PC-3 (cell line): ENCODE measurements at regions of chr10 and their contacts with region 1.

Region 1: DNA sequence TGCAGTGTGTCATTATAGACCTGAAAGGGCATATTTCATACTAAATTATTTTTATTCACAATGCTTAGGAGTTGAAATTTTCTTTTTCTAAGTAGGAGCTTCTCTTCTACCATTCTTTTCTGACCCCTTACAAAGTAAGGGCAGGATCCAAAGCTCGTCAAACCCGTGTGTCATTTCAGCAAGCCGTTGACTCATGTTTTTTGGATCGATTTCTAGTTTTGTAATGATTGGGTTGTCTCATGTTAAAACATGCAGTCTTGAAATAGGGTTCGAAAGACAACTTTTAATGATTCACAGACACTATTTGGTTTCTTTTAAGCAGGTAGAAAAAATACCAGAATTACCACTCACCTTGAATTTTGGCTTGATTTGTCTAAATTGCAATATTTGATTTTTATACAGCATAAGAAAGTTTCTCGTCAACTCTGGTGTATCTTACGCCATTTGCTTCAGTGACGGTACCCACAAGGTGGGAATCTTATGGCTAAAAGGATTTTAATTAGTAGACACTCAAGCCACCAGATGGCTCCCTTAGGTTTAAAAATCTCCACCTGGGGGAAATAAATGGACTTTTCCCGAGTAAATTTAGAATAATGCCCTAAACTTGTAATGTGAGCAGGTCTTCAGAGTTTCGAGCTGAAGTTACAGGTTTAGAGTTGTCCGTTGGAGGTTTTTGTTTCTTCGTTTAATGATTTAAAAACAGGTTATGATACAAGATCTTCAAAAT is 283.4 kb downstream of the CCDC3 start:
- DNase-seq: peak; percentile 75
- ATAC-seq: no peak
- H3K4me3 ChIP-seq: peak overlapping the region; percentile 7; the same call in 1 of the 2 replicates
- H3K27ac ChIP-seq: peak overlapping the region; percentile 95
- H3K4me1 ChIP-seq: peaks cover 31% of the 10 kb centered on the region
- H3K27me3 ChIP-seq: no peaks in the 10 kb centered on the region
- CTCF ChIP-seq: peak; percentile 51

Region 2: DNA sequence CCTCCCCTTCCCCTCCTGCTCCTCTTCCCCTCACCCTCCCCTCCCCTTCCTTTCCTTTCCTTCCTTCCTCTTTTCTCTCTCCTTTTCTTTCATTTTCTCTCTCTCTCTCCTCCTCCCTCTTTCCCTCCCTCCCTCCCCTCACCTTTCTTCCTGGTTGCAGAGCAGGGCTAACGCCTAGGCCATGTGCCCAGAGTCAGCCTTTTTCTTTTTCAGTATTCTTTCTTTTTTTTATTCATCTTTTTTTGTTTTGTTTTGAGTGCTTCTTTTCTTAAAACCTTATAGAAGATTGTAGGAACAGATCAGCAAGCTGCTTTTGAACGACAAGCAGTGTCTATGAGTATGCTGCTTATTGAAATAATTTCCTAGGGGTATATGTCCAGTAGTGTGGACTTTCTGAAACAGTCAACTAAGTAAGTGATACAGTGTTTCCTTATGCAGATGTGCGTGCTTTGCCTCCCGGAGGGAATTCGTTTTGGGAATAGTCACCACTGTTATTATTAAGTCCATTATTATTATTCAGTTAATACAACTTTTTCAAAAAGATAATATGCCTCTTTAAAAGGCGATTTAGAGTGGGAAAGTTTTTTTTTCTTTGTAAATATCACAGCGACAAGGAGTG is 149.6 kb before region 1 on chr10:
- CTCF ChIA-PET with region 1: no interaction called
- POLR2A ChIA-PET with region 1: no interaction called
- intact Hi-C with region 1: no loop called
- DNase-seq: no peak
- ATAC-seq: no peak
- H3K4me3 ChIP-seq: no peak overlapping the region
- H3K27ac ChIP-seq: no peak overlapping the region
- H3K4me1 ChIP-seq: peaks cover 11% of the 10 kb centered on the region
- H3K27me3 ChIP-seq: no peaks in the 10 kb centered on the region
- CTCF ChIP-seq: no peak

Region 3: DNA sequence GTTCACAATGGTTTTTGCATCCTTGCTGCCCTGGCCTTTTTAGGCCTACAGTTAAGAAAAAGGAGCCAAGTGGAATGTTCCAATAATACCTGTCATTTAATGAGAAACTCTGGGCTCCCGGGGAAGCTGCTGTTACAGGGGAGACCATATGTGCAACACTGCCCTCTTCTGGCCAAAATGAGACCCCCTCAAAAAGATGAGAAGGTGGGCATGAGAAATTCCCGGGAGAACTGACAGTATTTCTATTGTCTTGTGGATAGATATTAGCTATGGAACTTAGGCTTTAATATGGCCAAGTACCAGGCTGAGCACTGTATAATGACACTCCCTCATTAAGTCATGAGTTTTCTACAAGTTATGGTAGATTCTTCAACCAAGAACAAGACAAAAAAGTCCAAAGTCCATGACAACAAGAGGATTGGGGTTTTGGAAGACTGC is 184.0 kb after region 1 on chr10:
- CTCF ChIA-PET with region 1: no interaction called
- POLR2A ChIA-PET with region 1: no interaction called
- intact Hi-C with region 1: loop called (anchors 1 kb)
- DNase-seq: peak; percentile 53
- ATAC-seq: peak; percentile 40; the same call in 1 of the 2 replicates
- H3K4me3 ChIP-seq: no peak overlapping the region
- H3K27ac ChIP-seq: no peak overlapping the region
- H3K4me1 ChIP-seq: no peaks in the 10 kb centered on the region
- H3K27me3 ChIP-seq: no peaks in the 10 kb centered on the region
- CTCF ChIP-seq: peak; percentile 65

Region 4: GRCh38 chr10:12975266-12975665 is 257.1 kb after region 1 on chr10:
- CTCF ChIA-PET with region 1: no interaction called
- POLR2A ChIA-PET with region 1: no interaction called
- intact Hi-C with region 1: loop called (anchors 2 kb)
- DNase-seq: peak; percentile 42
- ATAC-seq: peak; percentile 49
- H3K4me3 ChIP-seq: no peak overlapping the region
- H3K27ac ChIP-seq: no peak overlapping the region
- H3K4me1 ChIP-seq: no peaks in the 10 kb centered on the region
- H3K27me3 ChIP-seq: no peaks in the 10 kb centered on the region
- CTCF ChIP-seq: peak; percentile 50

Region 5: GRCh38 chr10:13056456-13057077 is 338.4 kb after region 1 on chr10:
- CTCF ChIA-PET with region 1: no interaction called
- POLR2A ChIA-PET with region 1: no interaction called
- intact Hi-C with region 1: loop called (anchors 5 kb)
- DNase-seq: peak; percentile 47
- ATAC-seq: peak; percentile 48
- H3K4me3 ChIP-seq: no peak overlapping the region
- H3K27ac ChIP-seq: no peak overlapping the region
- H3K4me1 ChIP-seq: no peaks in the 10 kb centered on the region
- H3K27me3 ChIP-seq: no peaks in the 10 kb centered on the region
- CTCF ChIP-seq: peak; percentile 57

Region 6: DNA sequence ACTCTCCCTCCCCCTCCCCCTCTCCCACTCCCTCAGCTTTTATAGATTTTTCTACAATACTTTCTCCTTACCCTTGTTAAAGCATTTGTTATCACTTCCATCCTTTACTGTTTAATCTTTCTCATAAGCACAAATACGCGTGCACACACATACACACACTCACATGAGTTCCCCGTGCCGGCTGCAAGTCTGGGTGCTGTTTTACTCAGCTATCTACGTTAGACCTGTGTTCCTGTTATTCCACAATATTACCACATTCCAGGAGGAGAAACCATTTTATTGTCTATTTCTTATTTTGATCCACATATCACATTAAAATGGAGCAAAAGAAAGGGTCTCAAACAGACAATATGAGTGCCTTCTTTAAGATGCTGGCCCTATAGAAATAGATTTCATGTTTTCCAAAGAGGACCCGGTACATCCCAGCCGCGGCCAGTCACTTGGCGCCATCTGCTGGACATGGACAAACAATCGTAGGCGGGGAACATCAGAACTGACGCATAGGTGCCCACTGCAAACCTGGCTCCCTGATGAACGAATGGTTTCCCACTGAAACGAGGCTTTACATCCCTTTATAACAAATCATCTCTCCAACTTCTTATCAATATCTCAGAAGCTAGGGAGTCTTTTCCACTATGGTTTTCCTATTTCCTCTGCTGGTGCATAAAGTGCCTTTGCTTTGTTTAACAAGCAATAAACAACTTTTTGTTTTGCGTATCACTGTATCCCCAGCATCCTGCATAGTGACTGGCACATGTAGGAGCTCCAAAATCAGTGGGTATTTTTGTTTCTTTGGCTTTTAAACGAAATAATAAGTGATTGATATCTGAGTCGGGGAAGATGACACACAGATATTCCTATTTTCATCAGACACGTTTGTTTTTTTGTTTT is 356.7 kb after region 1 on chr10:
- CTCF ChIA-PET with region 1: interaction called, 3 read pairs
- POLR2A ChIA-PET with region 1: no interaction called
- intact Hi-C with region 1: loop called (anchors 2 kb)
- DNase-seq: peak; percentile 59
- ATAC-seq: peak; percentile 94
- H3K4me3 ChIP-seq: no peak overlapping the region
- H3K27ac ChIP-seq: no peak overlapping the region
- H3K4me1 ChIP-seq: no peaks in the 10 kb centered on the region
- H3K27me3 ChIP-seq: no peaks in the 10 kb centered on the region
- CTCF ChIP-seq: peak; percentile 74

Region 7: DNA sequence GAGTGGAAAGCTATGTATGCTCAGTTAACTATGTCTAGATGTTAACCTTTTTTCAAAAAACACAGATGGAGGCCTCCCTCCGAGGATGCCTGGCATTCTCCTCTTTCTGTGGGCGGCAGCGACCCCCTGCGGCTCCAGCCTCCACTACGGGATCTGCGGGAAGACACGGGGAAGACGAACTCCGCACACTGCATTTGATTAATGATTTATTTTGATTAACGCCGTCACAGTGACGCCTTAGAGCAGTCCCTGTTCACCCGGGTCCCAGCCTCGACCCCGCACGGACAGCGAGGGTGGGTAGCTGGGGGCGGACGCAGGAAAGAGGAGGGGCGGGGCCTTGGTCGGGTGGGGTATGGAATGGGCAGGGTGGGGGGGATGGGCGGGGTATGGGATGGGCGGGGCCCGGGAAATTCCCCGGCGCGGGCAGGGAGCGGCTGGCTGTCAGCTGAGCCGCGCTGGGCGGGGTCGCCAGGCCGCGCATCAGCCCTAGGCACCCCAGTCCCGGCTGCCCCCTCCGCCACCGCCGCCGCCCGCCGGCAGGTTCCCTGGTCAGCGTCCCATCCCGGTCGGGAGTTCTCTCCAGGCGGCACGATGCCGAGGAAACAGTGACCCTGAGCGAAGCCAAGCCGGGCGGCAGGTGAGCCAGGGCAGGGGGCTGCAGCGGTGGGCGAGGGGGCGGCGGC is 381.7 kb after region 1 on chr10 and contains the start of gene OPTN:
- CTCF ChIA-PET with region 1: interaction called, 3 read pairs
- POLR2A ChIA-PET with region 1: no interaction called
- intact Hi-C with region 1: loop called (anchors 1 kb)
- DNase-seq: peak; percentile 59
- ATAC-seq: peak; percentile 76
- H3K4me3 ChIP-seq: peak within 1 kb of the TSS; percentile 91
- H3K27ac ChIP-seq: peak within 1 kb of the TSS; percentile 44
- H3K4me1 ChIP-seq: no peaks in the 10 kb centered on the region
- H3K27me3 ChIP-seq: no peaks in the 10 kb centered on the region
- CTCF ChIP-seq: peak; percentile 75
- total RNA-seq, gene OPTN: 7.9 and 10.1 TPM in 2 replicates